Activated CD4-positive, alpha-beta T cell treated with anti-CD3 and anti-CD28 coated beads, Interleukin-2, amount 10 ng/mL, durations not matched to agents 7 days and 5 days (primary cell): ENCODE measurements at regions of chr4 and their contacts with region 1.

Region 1: DNA sequence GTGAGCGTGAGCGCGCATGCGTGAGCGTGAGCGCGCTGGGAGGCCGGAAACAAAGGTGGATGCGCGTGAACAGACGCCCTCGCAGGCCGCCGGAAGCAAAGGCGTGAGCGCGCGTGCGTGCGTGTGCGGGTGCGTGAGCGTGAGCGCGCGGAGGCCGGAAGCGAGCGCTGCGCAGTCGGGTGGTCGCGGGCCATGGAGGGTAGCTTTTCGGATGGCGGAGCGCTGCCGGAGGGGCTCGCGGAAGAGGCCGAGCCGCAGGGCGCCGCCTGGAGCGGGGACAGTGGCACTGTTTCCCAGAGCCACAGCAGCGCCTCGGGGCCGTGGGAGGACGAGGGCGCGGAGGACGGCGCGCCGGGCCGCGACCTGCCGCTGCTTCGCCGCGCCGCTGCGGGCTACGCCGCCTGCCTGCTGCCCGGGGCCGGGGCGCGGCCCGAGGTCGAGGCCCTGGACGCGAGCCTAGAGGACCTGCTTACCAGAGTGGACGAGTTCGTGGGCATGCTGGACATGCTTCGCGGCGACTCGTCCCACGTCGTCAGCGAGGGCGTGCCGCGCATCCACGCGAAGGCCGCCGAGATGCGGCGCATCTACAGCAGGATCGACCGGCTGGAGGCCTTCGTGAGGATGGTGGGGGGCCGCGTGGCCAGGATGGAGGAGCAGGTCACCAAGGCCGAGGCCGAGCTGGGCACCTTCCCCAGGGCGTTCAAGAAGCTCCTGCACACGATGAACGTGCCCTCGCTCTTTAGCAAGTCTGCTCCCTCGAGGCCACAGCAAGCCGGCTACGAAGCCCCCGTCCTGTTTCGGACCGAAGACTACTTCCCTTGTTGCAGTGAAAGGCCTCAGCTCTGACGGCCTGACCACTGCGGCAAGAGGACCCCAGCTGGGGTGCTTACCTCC is at the start of gene BLOC1S4:
- DNase-seq: peak; percentile 89
- H3K4me3 Mint-ChIP-seq: peak within 1 kb of the TSS; percentile 85
- H3K27ac Mint-ChIP-seq: peak within 1 kb of the TSS; percentile 91
- H3K4me1 Mint-ChIP-seq: peaks cover 35% of the 10 kb centered on the region
- H3K27me3 Mint-ChIP-seq: no peaks in the 10 kb centered on the region
- total RNA-seq, gene BLOC1S4: 16.6 to 17.6 TPM

Region 2: DNA sequence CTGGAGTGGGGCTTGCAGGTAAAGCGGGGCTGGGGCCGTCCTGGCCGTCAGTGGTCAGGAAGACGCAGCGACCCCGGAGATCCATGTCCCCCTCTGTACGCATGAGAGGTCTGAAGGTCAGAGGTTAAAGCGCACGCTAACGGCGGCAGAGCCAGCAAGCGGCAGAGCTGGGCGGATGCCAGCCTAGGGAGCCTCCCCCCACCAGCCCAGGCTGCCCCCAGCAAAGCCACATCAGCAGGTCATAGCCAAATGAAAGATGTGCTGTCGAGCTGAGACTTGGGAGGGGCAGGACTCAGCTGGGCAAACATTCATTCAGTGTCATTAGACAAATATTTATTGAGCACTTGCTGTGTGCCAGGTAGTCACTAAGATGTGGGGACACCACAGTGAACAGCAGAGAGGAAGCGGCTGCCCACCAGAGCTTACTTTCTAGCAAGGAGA is 515.3 kb before region 1 on chr4:
- CTCF ChIA-PET with region 1: no interaction called
- POLR2A ChIA-PET with region 1: no interaction called
- DNase-seq: no peak
- H3K4me3 Mint-ChIP-seq: peak overlapping the region; percentile 59
- H3K27ac Mint-ChIP-seq: peak overlapping the region; percentile 47
- H3K4me1 Mint-ChIP-seq: peaks cover 34% of the 10 kb centered on the region
- H3K27me3 Mint-ChIP-seq: peaks cover 30% of the 10 kb centered on the region

Region 3: GRCh38 chr4:6493658-6494304 is 222.5 kb before region 1 on chr4:
- CTCF ChIA-PET with region 1: no interaction called
- POLR2A ChIA-PET with region 1: no interaction called
- DNase-seq: peak; percentile 1
- H3K4me3 Mint-ChIP-seq: no peak overlapping the region
- H3K27ac Mint-ChIP-seq: no peak overlapping the region
- H3K4me1 Mint-ChIP-seq: no peaks in the 10 kb centered on the region
- H3K27me3 Mint-ChIP-seq: peaks cover 6% of the 10 kb centered on the region

Region 4: DNA sequence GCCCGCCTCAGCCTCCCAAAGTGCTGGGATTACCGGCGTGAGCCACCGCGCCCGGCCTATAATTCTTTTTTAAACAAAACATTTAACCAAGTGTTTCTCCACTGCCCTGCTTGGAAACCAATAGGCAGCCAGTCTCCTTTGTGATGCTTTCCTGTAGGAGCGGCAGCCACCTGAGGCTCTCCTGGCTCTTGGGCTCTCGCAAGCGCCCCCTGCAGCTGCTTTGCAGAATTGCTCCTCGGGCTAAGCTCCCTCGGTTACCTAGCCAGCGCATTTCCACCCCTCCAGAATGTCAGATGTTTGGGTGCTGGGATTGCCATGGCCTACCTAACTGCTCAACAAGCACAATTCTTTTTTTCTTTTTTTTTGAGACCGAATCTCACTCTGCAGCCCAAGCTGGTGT is 14.9 kb before region 1 on chr4:
- CTCF ChIA-PET with region 1: interaction called, 11 read pairs
- POLR2A ChIA-PET with region 1: no interaction called
- DNase-seq: peak; percentile 40
- H3K4me3 Mint-ChIP-seq: no peak overlapping the region
- H3K27ac Mint-ChIP-seq: peak overlapping the region; percentile 13
- H3K4me1 Mint-ChIP-seq: peaks cover 74% of the 10 kb centered on the region
- H3K27me3 Mint-ChIP-seq: no peaks in the 10 kb centered on the region

Region 5: GRCh38 chr4:6749341-6750171 is 33.3 kb after region 1 on chr4:
- CTCF ChIA-PET with region 1: no interaction called
- POLR2A ChIA-PET with region 1: no interaction called
- DNase-seq: no peak
- H3K4me3 Mint-ChIP-seq: no peak overlapping the region
- H3K27ac Mint-ChIP-seq: no peak overlapping the region
- H3K4me1 Mint-ChIP-seq: peaks cover 11% of the 10 kb centered on the region
- H3K27me3 Mint-ChIP-seq: peaks cover 2% of the 10 kb centered on the region

Region 6: DNA sequence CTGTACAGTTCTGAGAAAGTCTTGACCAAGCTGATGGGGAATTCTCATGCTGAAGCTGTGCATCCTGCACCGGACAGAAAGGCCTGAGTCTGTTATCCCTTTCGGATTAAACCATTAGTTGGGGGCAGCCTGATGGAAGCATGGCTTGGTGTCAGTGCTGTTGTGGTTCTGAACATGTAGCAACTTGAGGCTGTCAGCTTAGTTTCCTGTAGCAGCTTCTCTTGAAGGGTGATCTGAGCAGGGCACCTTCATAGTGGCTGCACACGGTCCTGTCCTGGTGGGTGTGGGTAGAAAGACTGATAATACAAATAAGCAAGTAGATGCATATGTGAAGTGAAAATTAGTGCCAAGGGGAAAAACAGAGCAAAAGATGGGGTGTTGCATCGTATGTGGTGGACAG is 77.9 kb after region 1 on chr4:
- CTCF ChIA-PET with region 1: no interaction called
- POLR2A ChIA-PET with region 1: no interaction called
- DNase-seq: no peak
- H3K4me3 Mint-ChIP-seq: no peak overlapping the region
- H3K27ac Mint-ChIP-seq: peak overlapping the region; percentile 28
- H3K4me1 Mint-ChIP-seq: peaks cover 45% of the 10 kb centered on the region
- H3K27me3 Mint-ChIP-seq: no peaks in the 10 kb centered on the region

Region 7: GRCh38 chr4:6873792-6874461 is 157.7 kb after region 1 on chr4:
- CTCF ChIA-PET with region 1: interaction called, 41 read pairs
- POLR2A ChIA-PET with region 1: interaction called, 3 read pairs
- DNase-seq: peak; percentile 87
- H3K4me3 Mint-ChIP-seq: no peak overlapping the region
- H3K27ac Mint-ChIP-seq: no peak overlapping the region
- H3K4me1 Mint-ChIP-seq: peaks cover 9% of the 10 kb centered on the region
- H3K27me3 Mint-ChIP-seq: no peaks in the 10 kb centered on the region

Region 8: DNA sequence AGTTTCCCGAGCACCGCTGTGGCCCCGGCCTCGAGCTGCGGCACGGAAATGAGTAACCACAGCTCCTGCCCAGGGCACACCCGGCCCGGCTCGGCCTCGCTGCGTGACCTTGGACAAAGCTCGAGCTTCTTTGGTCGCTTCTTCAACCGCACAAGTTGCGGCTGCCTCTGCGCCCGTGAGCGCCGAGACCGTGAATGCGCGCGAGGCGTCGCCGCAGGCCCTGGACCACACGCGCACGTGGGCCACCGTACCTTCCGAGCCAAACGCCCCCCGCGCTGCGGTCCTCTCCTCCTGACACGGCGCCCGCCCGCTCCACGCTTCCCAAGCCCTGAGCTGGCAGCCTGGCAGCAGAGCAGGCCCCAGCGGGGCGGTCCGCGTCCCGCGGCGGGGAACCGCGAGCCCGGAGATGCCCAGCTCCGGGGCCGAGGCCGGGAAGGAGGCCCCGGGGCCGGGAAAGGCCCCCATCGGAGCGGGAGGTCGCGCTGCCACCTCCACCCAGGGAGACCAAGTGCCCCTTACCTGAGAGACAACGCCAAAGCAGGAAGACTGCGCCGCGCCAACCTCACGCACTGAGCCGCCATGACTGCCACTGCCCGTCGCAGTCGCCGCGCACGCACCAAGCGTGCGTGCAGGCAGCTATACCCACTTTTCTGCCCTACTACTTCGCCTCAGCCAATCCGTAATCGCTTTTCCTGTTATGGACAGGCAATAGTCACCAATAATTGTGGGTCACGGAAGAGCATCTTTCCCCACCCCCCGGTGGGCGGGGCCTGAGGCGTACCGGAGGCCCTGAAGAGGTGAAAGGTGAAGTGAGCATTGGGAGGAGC is 351.4 kb after region 1 on chr4 and contains the start of gene GRPEL1:
- CTCF ChIA-PET with region 1: interaction called, 10 read pairs
- POLR2A ChIA-PET with region 1: no interaction called
- DNase-seq: peak; percentile 100
- H3K4me3 Mint-ChIP-seq: peak within 1 kb of the TSS; percentile 92
- H3K27ac Mint-ChIP-seq: peak within 1 kb of the TSS; percentile 94
- H3K4me1 Mint-ChIP-seq: peaks cover 49% of the 10 kb centered on the region
- H3K27me3 Mint-ChIP-seq: peaks cover 9% of the 10 kb centered on the region
- total RNA-seq, gene GRPEL1: 34.8 to 35.4 TPM